GM12878 (cell line): ENCODE measurements at regions of chr2 and their contacts with region 1.

Region 1: GRCh38 chr2:213751446-213751845 is 467.2 kb downstream of the SPAG16 start:
- DNase-seq: peak; percentile 59
- ATAC-seq: peak; percentile 95
- H3K4me3 ChIP-seq: no peak overlapping the region
- H3K27ac ChIP-seq: peak overlapping the region; percentile 22
- H3K4me1 ChIP-seq: peaks cover 3% of the 10 kb centered on the region; the same call in 1 of the 2 replicates
- H3K27me3 ChIP-seq: no peaks in the 10 kb centered on the region
- CTCF ChIP-seq: no peak
- EP300 ChIP-seq: peak; percentile 58 to 90
- POLR2A ChIP-seq: no peak
- RAD21 ChIP-seq: no peak

Region 2: GRCh38 chr2:213649182-213649581 is 102.3 kb before region 1 on chr2:
- CTCF ChIA-PET with region 1: no interaction called
- POLR2A ChIA-PET with region 1: no interaction called
- RAD21 ChIA-PET with region 1: no interaction called
- SMC1A ChIA-PET with region 1: no interaction called
- in situ Hi-C with region 1: no loop called
- intact Hi-C with region 1: no loop called
- DNase-seq: no peak
- ATAC-seq: no peak
- H3K4me3 ChIP-seq: no peak overlapping the region
- H3K27ac ChIP-seq: no peak overlapping the region
- H3K4me1 ChIP-seq: no peaks in the 10 kb centered on the region
- H3K27me3 ChIP-seq: no peaks in the 10 kb centered on the region; a peak in 1 of 4 replicates
- CTCF ChIP-seq: no peak
- EP300 ChIP-seq: no peak
- POLR2A ChIP-seq: no peak
- RAD21 ChIP-seq: no peak

Region 3: DNA sequence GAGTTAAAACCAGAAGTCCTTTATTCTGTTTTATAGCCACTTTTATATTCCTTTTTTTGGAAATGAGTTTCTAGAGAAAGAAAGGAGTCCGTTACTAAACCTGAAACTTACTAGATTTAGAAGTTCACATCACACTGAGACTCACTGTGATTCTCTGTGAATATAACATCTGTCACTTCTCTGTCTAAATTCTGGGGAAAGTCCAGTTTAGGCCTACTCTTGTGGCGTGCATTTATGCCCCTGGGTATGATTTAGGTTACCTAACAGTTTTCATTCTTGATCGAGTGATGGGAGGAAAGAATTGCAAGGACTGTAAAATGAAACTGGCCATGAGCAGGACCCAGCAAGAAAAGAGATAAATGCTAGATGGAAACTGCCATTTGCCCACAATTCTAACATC is 17.6 kb before region 1 on chr2:
- CTCF ChIA-PET with region 1: interaction called, 3 read pairs
- POLR2A ChIA-PET with region 1: no interaction called
- RAD21 ChIA-PET with region 1: interaction called, 7 read pairs
- SMC1A ChIA-PET with region 1: interaction called, 14 read pairs
- in situ Hi-C with region 1: no loop called
- intact Hi-C with region 1: no loop called
- DNase-seq: peak; percentile 59
- ATAC-seq: peak; percentile 98
- H3K4me3 ChIP-seq: no peak overlapping the region
- H3K27ac ChIP-seq: peak overlapping the region; percentile 75
- H3K4me1 ChIP-seq: peaks cover 7% of the 10 kb centered on the region
- H3K27me3 ChIP-seq: no peaks in the 10 kb centered on the region
- CTCF ChIP-seq: no peak
- EP300 ChIP-seq: peak; percentile 48 to 65; a peak in 1 of 4 replicates
- POLR2A ChIP-seq: no peak
- RAD21 ChIP-seq: no peak

Region 4: DNA sequence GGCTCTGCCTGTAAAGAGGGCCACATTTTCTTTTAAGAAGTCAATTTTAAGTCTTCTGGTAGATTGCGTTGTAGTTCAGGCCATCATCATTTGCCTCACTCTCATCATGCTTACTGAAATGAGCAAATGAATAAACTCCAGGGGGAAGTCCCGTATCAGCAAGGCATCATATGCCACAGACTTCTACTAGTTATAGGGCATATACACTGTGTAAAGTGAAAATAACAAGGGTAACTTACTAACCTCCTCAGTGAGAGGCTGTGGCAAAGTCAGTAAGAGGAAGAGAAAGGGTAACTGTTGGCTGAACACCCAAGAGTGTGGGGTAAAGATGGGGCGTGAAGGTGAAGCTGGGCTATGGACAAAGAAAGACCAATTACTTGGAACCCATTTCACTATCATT is 11.0 kb before region 1 on chr2:
- CTCF ChIA-PET with region 1: interaction called, 3 read pairs
- POLR2A ChIA-PET with region 1: no interaction called
- RAD21 ChIA-PET with region 1: interaction called, 6 read pairs
- SMC1A ChIA-PET with region 1: interaction called, 11 read pairs
- in situ Hi-C with region 1: no loop called
- intact Hi-C with region 1: no loop called
- DNase-seq: no peak
- ATAC-seq: peak; percentile 99
- H3K4me3 ChIP-seq: no peak overlapping the region
- H3K27ac ChIP-seq: no peak overlapping the region
- H3K4me1 ChIP-seq: no peaks in the 10 kb centered on the region
- H3K27me3 ChIP-seq: no peaks in the 10 kb centered on the region
- CTCF ChIP-seq: no peak
- EP300 ChIP-seq: no peak; a peak in 1 of 4 replicates
- POLR2A ChIP-seq: no peak
- RAD21 ChIP-seq: no peak

Region 5: DNA sequence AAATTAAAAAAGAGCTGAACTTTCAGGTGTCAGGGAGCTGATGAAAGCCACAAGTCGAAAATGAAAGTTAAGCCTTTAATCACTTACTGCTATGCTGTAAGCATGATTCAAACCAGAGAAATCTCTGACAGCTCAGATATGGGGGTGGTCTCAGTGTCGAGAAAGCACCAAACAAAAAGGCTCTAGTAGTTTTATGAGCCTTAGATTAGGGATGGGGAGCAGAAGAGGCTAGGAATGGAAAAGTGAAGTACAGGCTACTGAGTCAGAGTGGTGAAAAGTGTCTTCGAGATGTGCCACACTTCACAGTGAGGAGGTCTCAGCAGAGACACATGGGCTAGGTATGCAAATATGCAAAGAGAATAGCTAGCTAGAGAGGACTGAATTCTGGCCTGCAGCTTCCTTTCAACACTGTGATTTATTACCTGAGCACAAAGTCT is 15.0 kb after region 1 on chr2:
- CTCF ChIA-PET with region 1: interaction called, 13 read pairs
- POLR2A ChIA-PET with region 1: interaction called, 13 read pairs
- RAD21 ChIA-PET with region 1: interaction called, 26 read pairs
- SMC1A ChIA-PET with region 1: interaction called, 84 read pairs
- in situ Hi-C with region 1: no loop called
- intact Hi-C with region 1: loop called (anchors 1 kb)
- DNase-seq: peak; percentile 60
- ATAC-seq: peak; percentile 98
- H3K4me3 ChIP-seq: peak overlapping the region; percentile 33; the same call in 1 of the 2 replicates
- H3K27ac ChIP-seq: peak overlapping the region; percentile 75
- H3K4me1 ChIP-seq: peaks cover 14% of the 10 kb centered on the region
- H3K27me3 ChIP-seq: no peaks in the 10 kb centered on the region
- CTCF ChIP-seq: no peak
- EP300 ChIP-seq: no peak
- POLR2A ChIP-seq: no peak
- RAD21 ChIP-seq: no peak

Region 6: GRCh38 chr2:213787869-213788268 is 36.4 kb after region 1 on chr2:
- CTCF ChIA-PET with region 1: no interaction called
- POLR2A ChIA-PET with region 1: no interaction called
- RAD21 ChIA-PET with region 1: interaction called, 13 read pairs
- SMC1A ChIA-PET with region 1: interaction called, 5 read pairs
- in situ Hi-C with region 1: no loop called
- intact Hi-C with region 1: no loop called
- DNase-seq: no peak
- ATAC-seq: peak; percentile 79
- H3K4me3 ChIP-seq: no peak overlapping the region
- H3K27ac ChIP-seq: no peak overlapping the region
- H3K4me1 ChIP-seq: no peaks in the 10 kb centered on the region
- H3K27me3 ChIP-seq: no peaks in the 10 kb centered on the region
- CTCF ChIP-seq: no peak
- EP300 ChIP-seq: peak; percentile 22 to 55; a peak in 2 of 4 replicates
- POLR2A ChIP-seq: no peak
- RAD21 ChIP-seq: no peak

Region 7: DNA sequence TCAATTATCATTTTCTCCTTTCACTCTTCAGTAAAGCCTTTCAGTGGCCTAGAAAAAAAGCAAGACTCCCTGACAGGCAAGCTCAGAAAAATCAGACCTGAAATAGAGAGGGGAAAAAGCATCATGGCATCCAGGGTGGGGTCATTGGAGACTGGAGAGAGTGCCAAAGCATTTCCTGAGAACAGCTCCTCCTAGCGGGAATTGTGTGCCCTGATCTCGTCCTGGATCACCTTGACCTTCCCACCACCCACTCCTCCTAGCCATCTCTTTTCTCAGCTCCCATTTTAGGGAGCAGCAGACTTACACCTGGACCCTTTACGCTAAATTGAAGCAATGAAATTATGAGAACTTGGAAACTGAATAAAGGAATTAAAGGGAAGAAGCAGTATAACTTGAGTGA is 836.0 kb after region 1 on chr2:
- CTCF ChIA-PET with region 1: no interaction called
- POLR2A ChIA-PET with region 1: no interaction called
- RAD21 ChIA-PET with region 1: no interaction called
- SMC1A ChIA-PET with region 1: no interaction called
- in situ Hi-C with region 1: no loop called
- intact Hi-C with region 1: no loop called
- DNase-seq: no peak
- ATAC-seq: peak; percentile 54
- H3K4me3 ChIP-seq: no peak overlapping the region
- H3K27ac ChIP-seq: no peak overlapping the region
- H3K4me1 ChIP-seq: no peaks in the 10 kb centered on the region
- H3K27me3 ChIP-seq: no peaks in the 10 kb centered on the region
- CTCF ChIP-seq: peak; percentile 32 to 43 (median 33); a peak in 5 of 6 replicates
- EP300 ChIP-seq: no peak
- POLR2A ChIP-seq: no peak
- RAD21 ChIP-seq: peak; percentile 22; the same call in 1 of the 2 replicates